GM12878 (cell line): ENCODE measurements at regions of chr20 and their contacts with region 1.

Region 1: GRCh38 chr20:39049684-39050554 is 87.8 kb downstream of the DHX35 start:
- DNase-seq: peak; percentile 21
- ATAC-seq: peak; percentile 93
- H3K4me3 ChIP-seq: peak overlapping the region; percentile 75
- H3K27ac ChIP-seq: 0 out of 2 replicates have a peak overlapping the region, but pooled peaks have one; percentile 33
- H3K4me1 ChIP-seq: peaks cover 4% of the 10 kb centered on the region; the same call in 1 of the 2 replicates
- H3K27me3 ChIP-seq: no peaks in the 10 kb centered on the region
- CTCF ChIP-seq: peak; percentile 99; a peak in 5 of 6 replicates
- EP300 ChIP-seq: no peak
- POLR2A ChIP-seq: peak; percentile 77
- RAD21 ChIP-seq: peak; percentile 86

Region 2: DNA sequence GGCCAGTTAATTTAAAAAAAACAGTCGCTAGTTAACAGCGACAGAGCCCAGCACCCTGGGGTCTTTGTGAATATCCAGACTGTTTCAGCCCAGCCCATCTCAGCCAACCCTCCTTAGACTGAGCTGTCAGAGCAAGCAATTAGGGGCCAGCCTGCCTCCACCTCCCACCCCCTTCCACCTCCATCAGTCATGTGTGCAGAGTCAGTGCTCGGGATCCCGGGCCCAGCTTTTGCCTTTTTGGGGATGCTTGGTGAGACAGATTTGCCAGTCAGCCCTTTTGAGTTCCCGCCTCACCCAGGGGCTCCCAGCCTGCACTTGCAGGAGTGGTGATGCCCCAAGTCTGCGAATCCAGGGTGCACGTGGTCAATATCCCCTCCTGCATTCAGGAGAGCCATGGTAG is 130.2 kb before region 1 on chr20:
- CTCF ChIA-PET with region 1: interaction called, 182 read pairs
- POLR2A ChIA-PET with region 1: no interaction called
- RAD21 ChIA-PET with region 1: interaction called, 91 read pairs
- SMC1A ChIA-PET with region 1: interaction called, 16 read pairs
- in situ Hi-C with region 1: loop called (anchors 5 kb)
- intact Hi-C with region 1: no loop called
- DNase-seq: no peak
- ATAC-seq: no peak
- H3K4me3 ChIP-seq: no peak overlapping the region
- H3K27ac ChIP-seq: no peak overlapping the region
- H3K4me1 ChIP-seq: no peaks in the 10 kb centered on the region
- H3K27me3 ChIP-seq: no peaks in the 10 kb centered on the region
- CTCF ChIP-seq: no peak
- EP300 ChIP-seq: no peak
- POLR2A ChIP-seq: no peak; the same call in 1 of the 2 replicates
- RAD21 ChIP-seq: no peak

Region 3: DNA sequence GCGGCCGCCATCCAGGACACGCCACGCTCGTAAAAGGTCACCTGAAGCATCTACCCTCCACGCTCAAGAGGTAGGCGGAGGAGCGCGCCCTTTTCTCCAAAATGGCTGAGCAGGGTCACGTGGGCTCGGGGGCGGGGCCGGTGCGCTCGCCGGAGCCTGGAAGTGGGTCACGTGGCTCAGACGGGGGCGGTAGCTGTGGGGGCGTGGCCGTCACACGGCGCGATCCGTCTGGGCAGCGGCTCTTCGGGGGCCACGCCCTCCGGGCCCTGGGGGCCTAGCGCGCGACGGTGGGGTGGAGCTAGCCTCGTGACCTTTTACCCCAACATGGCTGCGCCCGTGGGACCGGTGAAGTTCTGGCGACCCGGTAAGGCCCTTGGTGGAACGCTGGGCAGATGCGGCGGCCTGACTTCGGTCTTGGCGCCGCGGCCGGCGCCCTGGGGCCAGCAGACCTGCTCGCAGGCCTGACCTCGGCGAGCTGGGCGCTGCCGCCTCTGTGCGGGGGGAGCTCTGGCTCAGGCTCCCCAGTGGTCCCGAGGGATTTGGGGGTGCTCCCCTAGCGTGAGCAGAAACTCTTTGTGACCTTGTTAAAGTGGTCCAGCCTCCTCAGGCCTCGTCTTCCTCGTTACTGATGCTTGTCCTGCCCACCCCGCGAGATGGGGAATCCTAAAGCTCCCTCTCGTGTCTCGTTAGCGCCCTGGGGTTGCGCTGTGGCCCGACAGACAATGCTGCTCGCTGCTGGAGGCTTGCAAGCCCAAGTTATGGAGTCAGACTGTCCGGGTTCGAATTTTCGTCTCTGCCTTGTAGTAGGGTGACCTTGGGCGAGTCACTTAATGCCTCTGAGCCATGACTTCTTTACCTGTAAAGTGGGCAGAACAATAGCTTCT is 87.6 kb before region 1 on chr20 and contains the start of gene DHX35:
- CTCF ChIA-PET with region 1: interaction called, 62 read pairs
- POLR2A ChIA-PET with region 1: interaction called, 3 read pairs
- RAD21 ChIA-PET with region 1: interaction called, 41 read pairs
- SMC1A ChIA-PET with region 1: interaction called, 27 read pairs
- in situ Hi-C with region 1: no loop called
- intact Hi-C with region 1: loop called (anchors 2 kb)
- DNase-seq: peak; percentile 91
- ATAC-seq: peak; percentile 98
- H3K4me3 ChIP-seq: peak within 1 kb of the TSS; percentile 88
- H3K27ac ChIP-seq: peak within 1 kb of the TSS; percentile 91
- H3K4me1 ChIP-seq: no peaks in the 10 kb centered on the region
- H3K27me3 ChIP-seq: no peaks in the 10 kb centered on the region
- CTCF ChIP-seq: peak; percentile 19 to 50 (median 38); a peak in 4 of 6 replicates
- EP300 ChIP-seq: peak in 1 of 2 experiments; percentile 34; a peak in 1 of 4 replicates
- POLR2A ChIP-seq: peak; percentile 90
- RAD21 ChIP-seq: peak; percentile 45; the same call in 1 of the 2 replicates
- polyA plus RNA-seq, gene DHX35: 4.3 to 4.4 TPM

Region 4: GRCh38 chr20:39013662-39014109 is 36.2 kb before region 1 on chr20:
- CTCF ChIA-PET with region 1: interaction called, 10 read pairs
- POLR2A ChIA-PET with region 1: no interaction called
- RAD21 ChIA-PET with region 1: no interaction called
- SMC1A ChIA-PET with region 1: no interaction called
- in situ Hi-C with region 1: no loop called
- intact Hi-C with region 1: no loop called
- DNase-seq: no peak
- ATAC-seq: no peak
- H3K4me3 ChIP-seq: no peak overlapping the region
- H3K27ac ChIP-seq: no peak overlapping the region
- H3K4me1 ChIP-seq: peaks cover 4% of the 10 kb centered on the region
- H3K27me3 ChIP-seq: no peaks in the 10 kb centered on the region
- CTCF ChIP-seq: no peak
- EP300 ChIP-seq: no peak
- POLR2A ChIP-seq: no peak
- RAD21 ChIP-seq: no peak

Region 5: DNA sequence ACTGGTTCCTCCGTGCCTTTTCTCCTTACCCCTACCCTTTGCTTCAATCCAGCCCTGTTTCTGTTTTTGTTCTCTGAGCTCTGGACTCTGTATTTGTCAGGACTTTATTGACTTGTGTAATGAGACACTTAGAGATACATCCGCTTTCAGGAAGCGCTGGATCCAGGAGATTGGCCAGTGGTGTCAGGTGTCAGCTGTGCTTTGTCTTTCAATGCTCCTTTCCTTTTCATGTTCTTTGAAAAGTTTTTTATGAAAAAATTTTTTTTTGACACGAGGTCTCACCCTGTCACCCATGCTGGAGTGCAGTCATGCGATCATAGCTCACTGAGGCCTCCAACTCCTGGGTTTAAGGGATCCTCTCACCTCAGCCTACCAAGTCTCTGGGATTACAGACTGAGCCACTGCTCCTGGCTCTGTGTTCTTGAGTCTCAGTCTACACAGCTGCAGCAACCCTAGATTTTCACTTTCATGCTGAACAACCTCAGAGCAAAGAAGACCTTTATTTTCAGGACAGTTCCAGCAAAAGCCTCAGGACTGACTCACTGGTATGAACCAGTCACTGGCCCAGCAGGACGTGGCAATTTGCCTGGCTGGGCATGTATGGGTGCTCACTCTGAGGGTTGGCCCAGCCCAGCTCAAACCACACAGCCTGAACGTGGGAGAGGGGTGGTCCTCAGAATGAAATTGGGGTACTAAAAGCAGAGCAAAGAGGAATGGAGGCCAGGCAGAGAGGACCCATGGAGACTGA is 20.7 kb after region 1 on chr20:
- CTCF ChIA-PET with region 1: interaction called, 49 read pairs
- POLR2A ChIA-PET with region 1: no interaction called
- RAD21 ChIA-PET with region 1: interaction called, 17 read pairs
- SMC1A ChIA-PET with region 1: interaction called, 6 read pairs
- in situ Hi-C with region 1: no loop called
- intact Hi-C with region 1: no loop called
- DNase-seq: no peak
- ATAC-seq: no peak
- H3K4me3 ChIP-seq: no peak overlapping the region
- H3K27ac ChIP-seq: no peak overlapping the region
- H3K4me1 ChIP-seq: no peaks in the 10 kb centered on the region
- H3K27me3 ChIP-seq: peaks cover 0 to 3% of the 10 kb centered on the region in 2 experiments; a peak in 3 of 4 replicates
- CTCF ChIP-seq: no peak
- EP300 ChIP-seq: no peak
- POLR2A ChIP-seq: no peak
- RAD21 ChIP-seq: no peak